Left cardiac atrium (tissue), 4 donors: ENCODE measurements at regions of chr10 and their contacts with region 1.

Region 1: GRCh38 chr10:70549962-70550458 is 52.5 kb downstream of the PRF1 start:
- DNase-seq: peak; percentile 63
- ATAC-seq: peak; percentile 73 to 74

Region 2: DNA sequence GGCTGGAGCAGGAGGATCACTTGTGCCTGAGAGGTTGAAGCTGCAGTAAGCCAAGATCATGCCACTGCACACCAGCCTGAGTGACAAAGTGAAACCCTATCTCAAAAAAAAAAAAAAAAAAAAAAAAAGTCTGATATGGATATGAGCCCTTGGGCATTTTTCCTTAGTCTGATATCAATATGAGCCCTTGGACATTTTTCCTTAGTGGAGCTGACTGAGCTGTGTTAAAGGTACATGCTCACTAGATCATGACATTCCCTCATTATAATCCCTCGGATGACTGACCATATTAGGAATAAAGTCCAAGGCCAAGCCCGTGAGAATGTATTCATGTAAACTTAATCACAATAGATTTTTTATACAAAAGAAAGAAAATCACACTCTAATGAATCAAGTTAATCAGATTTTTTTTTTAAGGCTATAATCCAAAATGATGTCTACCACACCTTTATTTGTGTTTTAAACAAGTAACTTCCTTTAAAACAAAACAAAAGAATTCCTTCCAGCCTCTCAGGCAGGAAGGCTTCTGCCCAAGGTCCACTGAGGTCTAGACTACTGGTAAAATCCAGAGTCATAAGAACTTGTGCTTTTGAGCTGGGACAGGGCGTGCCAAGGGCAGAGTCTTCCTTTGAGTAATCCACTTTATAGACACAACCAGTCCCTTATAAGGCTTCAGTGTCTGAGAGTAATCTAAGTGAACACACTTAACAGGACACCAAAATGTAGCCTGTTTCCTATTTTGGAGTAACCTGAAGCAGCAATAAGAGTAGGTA is 322.3 kb before region 1 on chr10:
- intact Hi-C with region 1: loop called in 1 of 2 experiments (anchors 10 kb)
- DNase-seq: no peak
- ATAC-seq: no peak

Region 3: DNA sequence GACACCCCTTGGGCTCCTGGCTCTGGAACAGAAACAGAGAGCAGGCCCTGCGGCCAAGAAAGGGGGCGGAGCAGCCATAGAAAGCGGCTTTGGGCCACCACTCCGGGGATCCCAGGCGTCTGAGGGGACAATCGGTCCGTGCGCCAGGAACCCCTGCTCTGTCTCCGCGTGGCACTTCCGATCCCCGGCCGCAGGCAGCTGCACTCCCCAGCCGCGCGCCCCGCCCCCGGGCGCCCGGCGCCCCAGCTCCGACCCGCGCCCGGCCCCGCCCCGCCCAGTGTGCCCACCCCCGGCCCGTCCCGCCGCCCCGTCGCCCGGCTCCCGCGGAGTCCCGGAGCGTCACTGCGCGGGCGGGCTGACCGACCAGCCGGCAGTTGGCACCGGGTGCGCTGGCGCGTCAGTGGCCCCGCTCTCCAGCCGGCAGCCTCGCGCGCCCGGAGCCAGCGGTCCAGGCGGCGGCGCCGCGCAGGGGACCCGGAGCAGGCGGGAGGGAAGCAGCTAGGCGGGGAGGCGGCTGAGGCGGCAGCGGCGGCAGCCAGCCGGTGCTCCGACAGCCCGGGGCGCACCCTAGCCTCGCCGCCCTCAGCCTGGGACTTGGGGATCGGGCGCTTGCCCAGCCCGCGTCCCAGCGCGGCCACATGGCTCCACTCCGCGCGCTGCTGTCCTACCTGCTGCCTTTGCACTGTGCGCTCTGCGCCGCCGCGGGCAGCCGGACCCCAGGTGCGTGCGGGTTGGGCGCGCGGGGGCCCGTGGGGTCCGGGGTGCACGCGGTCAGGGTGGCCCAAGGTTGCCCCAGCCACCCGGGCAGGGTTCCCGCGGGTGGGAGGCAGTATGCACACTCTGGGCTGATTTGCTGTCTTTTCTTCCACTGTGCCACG is 122.4 kb after region 1 on chr10 and contains the start of gene ADAMTS14:
- intact Hi-C with region 1: loop called in 1 of 2 experiments (anchors 10 kb)
- DNase-seq: peak; percentile 64
- ATAC-seq: peak; percentile 48 to 67
- total RNA-seq, gene ADAMTS14: 0.53 to 0.81 TPM

Region 4: DNA sequence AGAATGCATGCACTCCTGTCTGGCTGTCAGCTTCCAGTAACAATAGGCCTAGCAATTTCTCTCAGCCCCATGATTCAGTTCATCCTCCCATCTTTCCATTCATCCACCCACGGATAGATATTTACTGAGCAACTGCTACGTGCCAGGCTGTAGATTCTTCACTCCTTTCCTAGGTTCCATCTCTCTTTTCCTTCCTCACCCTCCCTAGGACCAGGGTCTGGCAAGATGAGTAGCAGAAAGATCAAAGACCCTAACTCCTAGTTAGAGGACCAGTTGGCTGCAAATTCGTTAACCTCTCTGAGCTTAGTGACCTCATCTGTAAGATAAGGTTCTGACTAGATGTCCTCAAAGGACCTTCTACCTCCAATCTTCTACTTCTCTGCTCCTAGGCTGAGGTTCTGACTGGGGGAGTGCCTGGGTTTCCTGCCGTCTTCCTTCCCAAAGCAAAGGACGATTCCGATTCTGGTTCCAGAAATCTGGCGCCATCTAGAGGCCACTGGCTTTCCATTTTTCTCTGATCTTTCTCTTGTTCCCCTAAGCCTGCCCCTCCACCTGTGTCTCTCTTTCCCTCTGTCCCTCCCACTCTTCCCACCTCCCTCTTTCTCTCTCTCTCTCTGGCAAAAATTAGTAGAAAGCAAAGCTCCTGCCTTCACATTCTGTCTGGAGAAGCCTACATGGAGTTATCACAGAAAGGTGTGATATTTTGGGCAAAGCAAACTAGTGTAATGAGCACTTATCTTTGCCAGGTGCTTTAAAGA is 208.9 kb after region 1 on chr10:
- intact Hi-C with region 1: loop called (anchors 1 to 2 kb)
- DNase-seq: peak; percentile 72
- ATAC-seq: peak; percentile 59 to 79

Region 5: GRCh38 chr10:70880077-70880534 is 330.1 kb after region 1 on chr10:
- intact Hi-C with region 1: loop called (anchors 2 to 10 kb)
- DNase-seq: peak; percentile 78
- ATAC-seq: peak; percentile 79 to 82